Calu3 (cell line): ENCODE measurements at regions of chr9 and their contacts with region 1.

Region 1: GRCh38 chr9:33473643-33474352 is at the start of gene NOL6:
- DNase-seq: peak; percentile 94
- H3K4me3 Mint-ChIP-seq: peak within 1 kb of the TSS; percentile 100
- H3K27ac Mint-ChIP-seq: peak within 1 kb of the TSS; percentile 98
- H3K4me1 Mint-ChIP-seq: peaks cover 9% of the 10 kb centered on the region
- H3K27me3 Mint-ChIP-seq: no peaks in the 10 kb centered on the region
- CTCF ChIP-seq: no peak
- total RNA-seq, gene NOL6: 39.3 and 48.7 TPM in 2 replicates

Region 2: GRCh38 chr9:33130508-33130911 is 343.3 kb before region 1 on chr9:
- CTCF ChIA-PET with region 1: no interaction called
- intact Hi-C with region 1: no loop called
- DNase-seq: peak; percentile 2
- H3K4me3 Mint-ChIP-seq: peak overlapping the region; percentile 52
- H3K27ac Mint-ChIP-seq: peak overlapping the region; percentile 79
- H3K4me1 Mint-ChIP-seq: peaks cover 54% of the 10 kb centered on the region
- H3K27me3 Mint-ChIP-seq: no peaks in the 10 kb centered on the region
- CTCF ChIP-seq: no peak

Region 3: DNA sequence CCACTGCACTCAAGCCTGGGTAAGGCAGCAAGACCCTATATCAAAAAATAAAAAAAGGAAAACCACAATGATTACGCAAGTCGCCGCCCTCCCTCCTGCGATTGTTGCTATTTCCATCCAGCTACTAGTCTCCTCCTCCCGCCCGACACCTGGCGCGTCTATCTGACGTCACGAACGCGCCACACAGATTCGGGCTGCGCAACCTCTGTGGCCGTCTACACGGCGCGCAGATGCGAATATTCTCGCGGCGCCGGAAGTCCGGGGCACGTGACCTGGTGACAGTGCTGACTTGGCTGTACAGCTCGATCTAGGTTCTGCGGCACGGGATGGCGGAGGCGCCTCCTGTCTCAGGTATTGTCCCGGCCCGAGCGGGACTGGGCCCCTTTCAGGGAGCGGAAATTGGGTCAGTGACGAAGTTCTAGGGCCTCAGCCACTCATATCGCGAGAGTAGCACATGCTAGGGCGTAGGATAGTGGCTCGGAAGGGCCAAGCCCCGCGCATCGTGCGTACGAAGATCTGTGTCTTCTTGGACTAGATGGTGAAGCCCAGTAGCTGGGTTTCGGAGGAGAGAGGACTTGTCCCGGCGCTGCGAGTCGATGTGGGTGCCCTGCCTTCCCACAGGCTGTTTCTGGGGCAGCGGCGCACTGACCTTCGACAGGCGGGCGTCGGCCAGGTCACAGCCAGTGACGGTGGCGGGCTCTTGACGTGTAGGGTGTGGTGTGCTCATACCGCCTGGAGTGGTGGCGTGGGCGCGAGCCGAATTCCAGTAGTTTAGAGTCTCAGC is 183.4 kb before region 1 on chr9 and contains the start of gene NFX1:
- CTCF ChIA-PET with region 1: no interaction called
- intact Hi-C with region 1: loop called (anchors 5 kb)
- DNase-seq: peak; percentile 92
- H3K4me3 Mint-ChIP-seq: peak within 1 kb of the TSS; percentile 98
- H3K27ac Mint-ChIP-seq: peak within 1 kb of the TSS; percentile 100
- H3K4me1 Mint-ChIP-seq: peaks cover 14% of the 10 kb centered on the region
- H3K27me3 Mint-ChIP-seq: no peaks in the 10 kb centered on the region
- CTCF ChIP-seq: no peak
- total RNA-seq, gene NFX1: 27.3 and 31.1 TPM in 2 replicates

Region 4: GRCh38 chr9:33506626-33507370 is 33.0 kb after region 1 on chr9:
- CTCF ChIA-PET with region 1: interaction called, 5 read pairs
- intact Hi-C with region 1: loop called (anchors 5 kb)
- DNase-seq: peak; percentile 82
- H3K4me3 Mint-ChIP-seq: peak overlapping the region; percentile 32
- H3K27ac Mint-ChIP-seq: peak overlapping the region; percentile 98
- H3K4me1 Mint-ChIP-seq: peaks cover 21% of the 10 kb centered on the region
- H3K27me3 Mint-ChIP-seq: no peaks in the 10 kb centered on the region
- CTCF ChIP-seq: no peak

Region 5: GRCh38 chr9:33524306-33524947 is 50.6 kb after region 1 on chr9:
- CTCF ChIA-PET with region 1: interaction called, 11 read pairs
- intact Hi-C with region 1: no loop called
- DNase-seq: peak; percentile 21
- H3K4me3 Mint-ChIP-seq: peak overlapping the region; percentile 91
- H3K27ac Mint-ChIP-seq: peak overlapping the region; percentile 89
- H3K4me1 Mint-ChIP-seq: peaks cover 30% of the 10 kb centered on the region
- H3K27me3 Mint-ChIP-seq: no peaks in the 10 kb centered on the region
- CTCF ChIP-seq: no peak

Region 6: GRCh38 chr9:34646211-34647083 is 1172.6 kb after region 1 on chr9 and contains the start of gene GALT:
- CTCF ChIA-PET with region 1: no interaction called
- intact Hi-C with region 1: no loop called
- DNase-seq: peak; percentile 95
- H3K4me3 Mint-ChIP-seq: peak within 1 kb of the TSS; percentile 74
- H3K27ac Mint-ChIP-seq: peak within 1 kb of the TSS; percentile 67
- H3K4me1 Mint-ChIP-seq: peaks cover 10% of the 10 kb centered on the region
- H3K27me3 Mint-ChIP-seq: no peaks in the 10 kb centered on the region
- CTCF ChIP-seq: no peak
- total RNA-seq, gene GALT: 25.7 and 26.6 TPM in 2 replicates